ENCODE measurements at regions of chr10 and their contacts with region 1.

Region 1: DNA sequence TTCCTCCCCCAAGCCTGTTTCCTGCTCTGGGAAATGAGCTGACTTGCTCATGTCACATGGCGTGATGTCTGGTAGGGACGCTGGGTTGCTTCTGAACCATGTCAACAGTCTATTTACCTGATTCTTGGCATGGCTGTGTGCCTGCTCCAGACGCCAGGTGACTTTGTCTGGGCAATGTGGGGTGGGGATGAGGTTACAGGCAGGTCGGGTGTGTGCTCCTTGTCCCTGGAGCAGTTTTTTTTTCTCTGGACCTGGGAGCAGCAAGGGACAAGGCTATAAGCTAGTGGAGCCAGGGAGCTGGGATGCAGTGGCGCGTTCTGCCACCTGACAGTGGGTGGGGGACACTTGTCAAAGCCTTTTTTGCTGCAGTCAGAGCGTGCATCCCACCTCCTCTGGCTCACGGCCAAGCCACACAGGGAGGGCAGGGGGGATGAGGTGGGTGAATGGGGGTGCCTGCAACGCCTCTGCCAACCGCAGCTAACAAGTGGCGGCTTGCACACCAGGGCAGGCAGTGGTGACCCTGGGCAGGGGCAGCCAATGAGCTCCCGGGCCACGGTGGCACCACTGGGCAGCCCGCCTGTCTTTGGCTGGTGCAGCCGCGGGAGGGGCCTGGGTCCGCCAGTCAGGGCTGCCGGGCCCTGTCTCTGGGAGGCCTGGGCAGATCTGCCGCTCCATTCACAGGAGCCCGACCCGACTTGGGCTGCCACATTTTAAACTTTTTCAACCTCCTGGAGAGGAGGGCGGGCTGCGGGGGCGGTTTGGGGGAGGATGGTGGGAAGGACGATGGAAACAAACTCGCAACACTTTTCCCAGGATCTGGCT is 22.9 kb downstream of the DNAJB12 start:
- DNase-seq: peak; percentile 95
- H3K4me3 Mint-ChIP-seq: peak overlapping the region; percentile 65
- H3K27ac Mint-ChIP-seq: peak overlapping the region; percentile 90
- H3K4me1 Mint-ChIP-seq: peaks cover 95% of the 10 kb centered on the region
- H3K27me3 Mint-ChIP-seq: no peaks in the 10 kb centered on the region

Region 2: DNA sequence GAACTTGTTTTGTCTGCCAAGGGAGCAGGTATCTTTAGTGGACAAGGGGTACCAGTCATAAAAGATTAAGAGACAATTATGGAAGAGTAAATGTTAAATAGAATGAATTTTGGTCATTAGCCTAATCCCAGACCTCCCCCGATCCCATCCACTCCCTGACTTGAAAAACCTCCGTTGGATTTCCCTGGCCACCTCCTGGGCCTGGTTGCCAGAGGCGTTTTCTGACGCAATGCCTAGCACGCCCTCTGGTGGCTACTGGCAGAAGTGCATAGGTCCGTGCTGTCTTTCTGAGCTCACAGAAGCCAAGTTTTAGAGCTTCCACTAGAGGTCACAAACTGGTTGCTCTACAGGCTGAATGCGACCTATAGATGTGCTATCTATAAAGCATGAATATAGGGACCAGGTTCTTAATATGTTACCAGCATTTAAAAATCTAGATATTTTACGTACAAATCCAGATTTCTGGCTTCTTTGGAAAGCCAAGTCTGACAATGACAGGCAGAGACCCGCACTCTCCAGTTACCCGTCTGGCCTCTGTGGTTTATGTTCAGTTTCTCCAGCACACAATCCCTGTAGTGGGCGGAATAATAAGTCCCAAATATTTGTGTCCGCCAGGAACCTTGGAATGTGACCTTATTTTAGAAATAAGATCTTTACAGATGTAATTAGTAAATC is 283.2 kb before region 1 on chr10:
- CTCF ChIA-PET with region 1: interaction called, 59 read pairs
- POLR2A ChIA-PET with region 1: interaction called, 3 read pairs
- DNase-seq: peak; percentile 93
- H3K4me3 Mint-ChIP-seq: no peak overlapping the region
- H3K27ac Mint-ChIP-seq: peak overlapping the region; percentile 8
- H3K4me1 Mint-ChIP-seq: peaks cover 8% of the 10 kb centered on the region
- H3K27me3 Mint-ChIP-seq: no peaks in the 10 kb centered on the region

Region 3: GRCh38 chr10:72133517-72133916 is 198.3 kb before region 1 on chr10:
- CTCF ChIA-PET with region 1: interaction called, 63 read pairs
- POLR2A ChIA-PET with region 1: no interaction called
- DNase-seq: no peak
- H3K4me3 Mint-ChIP-seq: no peak overlapping the region
- H3K27ac Mint-ChIP-seq: no peak overlapping the region
- H3K4me1 Mint-ChIP-seq: peaks cover 38% of the 10 kb centered on the region
- H3K27me3 Mint-ChIP-seq: no peaks in the 10 kb centered on the region

Region 4: GRCh38 chr10:72248468-72249151 is 83.2 kb before region 1 on chr10:
- CTCF ChIA-PET with region 1: interaction called, 13 read pairs
- POLR2A ChIA-PET with region 1: interaction called, 56 read pairs
- DNase-seq: peak; percentile 86
- H3K4me3 Mint-ChIP-seq: peak overlapping the region; percentile 73
- H3K27ac Mint-ChIP-seq: peak overlapping the region; percentile 96
- H3K4me1 Mint-ChIP-seq: peaks cover 78% of the 10 kb centered on the region
- H3K27me3 Mint-ChIP-seq: no peaks in the 10 kb centered on the region

Region 5: DNA sequence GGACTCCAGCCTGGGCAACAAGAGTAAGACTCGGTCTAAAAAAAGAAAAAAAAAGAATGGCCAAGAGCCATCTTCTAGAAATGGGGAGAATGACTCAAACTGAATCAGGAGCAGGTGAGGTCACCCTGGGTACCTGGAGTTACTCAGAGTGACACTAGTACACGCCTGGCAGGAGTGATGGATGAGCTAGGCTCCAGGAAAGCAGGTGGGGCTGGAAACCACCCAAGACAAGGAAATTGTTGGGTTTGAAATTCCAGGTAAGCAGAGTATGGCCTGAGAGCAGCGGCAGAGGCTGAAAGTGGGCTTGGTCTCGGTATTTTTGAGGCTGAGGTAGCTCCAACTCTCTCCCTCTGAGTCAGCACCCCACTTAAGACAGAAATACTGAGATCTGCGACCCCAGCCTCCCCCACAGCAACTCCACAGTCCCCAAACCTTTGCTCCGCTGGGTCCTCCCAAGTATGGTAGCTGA is 39.6 kb before region 1 on chr10:
- CTCF ChIA-PET with region 1: interaction called, 21 read pairs
- POLR2A ChIA-PET with region 1: interaction called, 64 read pairs
- DNase-seq: peak; percentile 60
- H3K4me3 Mint-ChIP-seq: peak overlapping the region; percentile 31
- H3K27ac Mint-ChIP-seq: peak overlapping the region; percentile 90
- H3K4me1 Mint-ChIP-seq: peaks cover 67% of the 10 kb centered on the region
- H3K27me3 Mint-ChIP-seq: no peaks in the 10 kb centered on the region

Region 6: DNA sequence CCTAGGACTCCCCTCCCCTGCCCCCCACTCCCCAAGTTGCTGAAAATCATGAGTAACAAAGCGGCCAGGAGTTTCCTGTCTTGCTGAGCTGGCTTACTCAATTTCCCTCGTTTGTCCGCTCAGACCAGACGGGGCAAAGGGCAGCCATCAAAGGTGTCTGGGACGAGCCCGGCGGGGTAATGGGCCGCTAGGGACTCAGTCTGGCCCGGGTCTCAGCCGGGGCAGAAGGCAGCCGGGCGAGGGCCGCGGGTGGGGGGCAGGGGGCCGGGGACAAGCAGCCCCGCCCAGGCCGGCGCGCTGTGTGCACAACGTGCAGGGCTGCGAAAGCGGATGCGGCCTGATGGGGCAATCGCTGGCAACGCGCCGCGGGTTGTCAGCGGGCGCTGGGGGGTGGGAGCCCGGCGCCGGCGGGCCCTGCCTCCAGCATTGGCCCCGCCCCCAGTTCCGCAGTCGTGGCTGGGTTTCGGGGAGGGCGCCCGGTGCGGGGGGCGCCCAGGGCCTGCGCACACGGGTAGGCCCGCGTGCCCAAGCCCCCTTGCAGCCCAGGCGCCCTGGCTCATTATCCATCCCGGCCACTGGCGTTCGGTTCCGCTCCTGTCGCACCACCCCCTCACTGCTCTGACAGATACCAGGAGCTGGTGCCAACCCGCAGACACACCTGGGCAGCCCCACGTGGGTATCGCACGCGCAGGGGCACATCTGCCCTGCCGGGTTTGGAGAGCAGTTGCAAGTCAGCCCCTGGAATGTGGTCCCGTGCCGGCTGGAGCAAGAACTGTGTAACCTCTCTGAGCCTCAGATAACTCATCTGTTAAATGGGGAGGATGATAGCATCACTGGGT is 12.2 kb before region 1 on chr10:
- CTCF ChIA-PET with region 1: interaction called, 20 read pairs
- POLR2A ChIA-PET with region 1: interaction called, 108 read pairs
- DNase-seq: peak; percentile 92
- H3K4me3 Mint-ChIP-seq: peak overlapping the region; percentile 76
- H3K27ac Mint-ChIP-seq: peak overlapping the region; percentile 98
- H3K4me1 Mint-ChIP-seq: peaks cover 81% of the 10 kb centered on the region
- H3K27me3 Mint-ChIP-seq: no peaks in the 10 kb centered on the region

Region 7: DNA sequence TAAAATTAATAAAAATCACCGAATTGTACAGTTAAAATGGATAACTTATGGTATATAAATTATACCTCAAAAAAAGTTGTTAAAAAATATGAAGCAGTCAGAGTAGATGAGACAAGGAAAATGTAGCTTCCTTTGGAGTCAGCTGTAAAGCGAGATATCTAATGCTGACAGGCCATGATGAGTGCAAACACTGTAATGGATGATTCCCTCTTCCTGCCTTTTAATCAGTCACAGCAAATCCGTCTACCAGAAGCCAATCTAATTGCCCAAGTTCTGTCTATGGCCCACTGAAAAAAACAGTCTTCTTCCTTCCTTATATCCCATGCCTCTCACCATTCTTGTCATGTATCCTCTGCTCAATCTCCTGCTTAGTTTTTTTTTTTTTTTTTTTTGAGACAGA is 82.8 kb after region 1 on chr10:
- CTCF ChIA-PET with region 1: no interaction called
- POLR2A ChIA-PET with region 1: no interaction called
- DNase-seq: no peak
- H3K4me3 Mint-ChIP-seq: no peak overlapping the region
- H3K27ac Mint-ChIP-seq: no peak overlapping the region
- H3K4me1 Mint-ChIP-seq: no peaks in the 10 kb centered on the region
- H3K27me3 Mint-ChIP-seq: no peaks in the 10 kb centered on the region

Region 8: GRCh38 chr10:72455889-72456595 is 124.2 kb after region 1 on chr10:
- CTCF ChIA-PET with region 1: no interaction called
- POLR2A ChIA-PET with region 1: no interaction called
- DNase-seq: no peak
- H3K4me3 Mint-ChIP-seq: no peak overlapping the region
- H3K27ac Mint-ChIP-seq: no peak overlapping the region
- H3K4me1 Mint-ChIP-seq: no peaks in the 10 kb centered on the region
- H3K27me3 Mint-ChIP-seq: no peaks in the 10 kb centered on the region

Region 9: DNA sequence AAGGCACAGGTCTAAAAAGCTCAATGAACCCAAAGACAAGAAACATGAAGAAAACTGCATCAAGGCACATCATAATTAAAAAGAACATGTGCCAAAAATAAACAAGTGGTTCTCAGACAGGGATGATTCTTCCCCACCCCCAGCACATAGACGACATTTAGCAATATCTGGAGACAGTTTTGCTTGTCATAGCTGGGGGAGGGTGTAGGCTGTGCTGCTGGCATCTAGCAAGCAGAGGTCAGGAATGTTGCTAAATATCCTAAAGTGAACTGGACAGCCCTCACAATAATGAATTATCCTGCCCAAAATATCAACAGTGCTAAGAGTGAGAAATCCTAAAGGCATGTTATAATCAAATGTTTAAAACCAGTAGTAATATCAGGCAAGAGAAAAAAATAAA is 171.4 kb after region 1 on chr10:
- CTCF ChIA-PET with region 1: no interaction called
- POLR2A ChIA-PET with region 1: no interaction called
- DNase-seq: no peak
- H3K4me3 Mint-ChIP-seq: no peak overlapping the region
- H3K27ac Mint-ChIP-seq: no peak overlapping the region
- H3K4me1 Mint-ChIP-seq: no peaks in the 10 kb centered on the region
- H3K27me3 Mint-ChIP-seq: no peaks in the 10 kb centered on the region

Measured in activated CD4-positive, alpha-beta memory T cell treated with anti-CD3 and anti-CD28 coated beads, Interleukin-2, amount 10 ng/mL, durations not matched to agents 7 days and 5 days (primary cell).